ENCODE measurements at regions of chr6 and their contacts with region 1.

Region 1: GRCh38 chr6:110618591-110619267 is 142.3 kb upstream of the SLC22A16 start:
- DNase-seq: peak; percentile 19
- H3K4me3 Mint-ChIP-seq: peak overlapping the region; percentile 30
- H3K27ac Mint-ChIP-seq: peak overlapping the region; percentile 43
- H3K4me1 Mint-ChIP-seq: peaks cover 13% of the 10 kb centered on the region
- H3K27me3 Mint-ChIP-seq: no peaks in the 10 kb centered on the region
- CTCF ChIP-seq: no peak

Region 2: DNA sequence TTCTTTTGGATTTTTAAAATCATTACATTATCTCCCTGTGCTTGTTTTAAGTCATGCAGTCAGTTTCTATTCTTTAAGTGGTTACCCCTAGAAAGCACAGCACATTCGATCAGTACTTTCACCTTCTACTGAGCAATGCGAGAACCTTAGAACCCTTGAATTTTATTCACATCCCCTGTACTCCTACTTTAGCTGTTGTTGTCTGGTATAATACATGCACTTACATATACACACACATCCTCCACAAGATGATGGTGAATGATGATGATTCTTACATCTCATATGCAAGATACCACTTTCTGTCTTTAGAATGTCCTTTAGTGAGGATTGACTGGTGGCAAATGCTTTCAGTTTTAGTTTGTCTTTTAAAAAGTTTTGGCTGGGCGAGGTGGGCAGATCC is 432.9 kb before region 1 on chr6:
- CTCF ChIA-PET with region 1: no interaction called
- intact Hi-C with region 1: no loop called
- DNase-seq: no peak
- H3K4me3 Mint-ChIP-seq: no peak overlapping the region
- H3K27ac Mint-ChIP-seq: no peak overlapping the region
- H3K4me1 Mint-ChIP-seq: no peaks in the 10 kb centered on the region
- H3K27me3 Mint-ChIP-seq: no peaks in the 10 kb centered on the region
- CTCF ChIP-seq: no peak

Region 3: GRCh38 chr6:110688661-110689268 is 70.0 kb after region 1 on chr6:
- CTCF ChIA-PET with region 1: no interaction called
- intact Hi-C with region 1: no loop called
- DNase-seq: peak; percentile 45
- H3K4me3 Mint-ChIP-seq: peak overlapping the region; percentile 18
- H3K27ac Mint-ChIP-seq: no peak overlapping the region
- H3K4me1 Mint-ChIP-seq: peaks cover 32% of the 10 kb centered on the region
- H3K27me3 Mint-ChIP-seq: no peaks in the 10 kb centered on the region
- CTCF ChIP-seq: no peak

Region 4: GRCh38 chr6:110826236-110827129 is 207.8 kb after region 1 on chr6:
- CTCF ChIA-PET with region 1: no interaction called
- intact Hi-C with region 1: no loop called
- DNase-seq: no peak
- H3K4me3 Mint-ChIP-seq: no peak overlapping the region
- H3K27ac Mint-ChIP-seq: no peak overlapping the region
- H3K4me1 Mint-ChIP-seq: no peaks in the 10 kb centered on the region
- H3K27me3 Mint-ChIP-seq: no peaks in the 10 kb centered on the region
- CTCF ChIP-seq: no peak

Region 5: DNA sequence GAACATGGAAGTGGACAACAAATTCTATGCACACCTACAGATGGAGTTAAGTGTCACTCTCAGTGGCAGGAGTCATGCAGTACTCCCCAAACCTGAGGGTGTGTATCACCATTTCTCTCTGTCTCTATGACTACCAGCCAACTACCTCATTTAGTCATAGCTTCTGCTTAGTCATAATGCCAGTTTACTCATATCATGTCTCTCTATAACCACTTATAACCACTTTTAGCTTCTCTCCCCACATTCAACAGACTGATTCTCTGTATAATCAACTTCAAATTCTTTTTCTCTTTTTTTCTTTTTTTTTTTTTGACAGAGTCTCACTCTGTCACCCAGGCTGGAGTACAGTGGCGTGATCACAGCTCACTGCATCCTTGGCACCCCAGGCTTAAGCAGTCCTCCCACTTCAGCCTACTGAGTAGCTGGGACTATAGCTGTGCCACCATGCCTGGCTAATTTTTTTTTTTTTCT is 326.0 kb after region 1 on chr6:
- CTCF ChIA-PET with region 1: no interaction called
- intact Hi-C with region 1: loop called (anchors 5 kb)
- DNase-seq: peak; percentile 11
- H3K4me3 Mint-ChIP-seq: no peak overlapping the region
- H3K27ac Mint-ChIP-seq: no peak overlapping the region
- H3K4me1 Mint-ChIP-seq: peaks cover 7% of the 10 kb centered on the region
- H3K27me3 Mint-ChIP-seq: no peaks in the 10 kb centered on the region
- CTCF ChIP-seq: no peak